ENCODE measurements at regions of chr19 and their contacts with region 1.

Region 1: DNA sequence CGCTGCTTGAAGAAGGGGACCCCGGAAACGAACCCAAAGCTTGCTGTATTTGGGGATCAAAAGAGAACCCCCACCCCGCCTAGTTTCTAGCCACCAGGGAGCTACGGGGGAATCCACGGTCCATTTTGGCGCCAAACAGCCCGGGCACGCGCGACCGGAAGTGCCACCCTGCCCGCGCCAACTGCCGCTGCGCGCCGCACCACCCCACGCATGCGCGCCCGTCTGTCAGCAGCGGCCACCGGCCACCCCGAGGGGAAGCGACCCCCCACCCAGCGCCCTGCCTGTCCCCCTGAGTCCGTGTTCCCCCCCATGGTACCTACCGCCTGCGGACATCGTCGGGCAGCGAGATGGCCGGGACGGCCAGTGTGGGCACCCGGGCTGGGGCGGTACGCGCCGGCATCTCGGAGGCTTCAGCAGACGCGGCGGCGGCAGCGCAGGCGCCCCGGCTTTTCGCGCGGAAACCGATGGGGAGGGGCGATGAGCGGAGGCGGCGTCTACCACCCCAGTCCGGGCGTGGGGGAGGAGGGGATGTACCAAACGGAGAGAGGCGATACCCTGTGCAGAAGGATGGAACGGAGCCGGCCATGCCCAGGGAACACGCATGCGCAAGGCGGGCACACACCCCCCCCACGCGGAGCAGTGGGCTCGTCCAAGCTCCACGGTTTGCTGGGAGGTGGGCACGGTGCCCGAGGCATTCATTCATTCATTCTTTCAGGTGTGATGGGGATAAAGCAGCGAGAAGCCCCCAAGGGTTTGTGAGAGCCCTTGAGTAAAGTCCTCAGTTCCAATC is at the start of gene DNMT1:
- DNase-seq: peak; percentile 97 to 99 (median 98)
- ATAC-seq: peak; percentile 98
- H3K4me3 ChIP-seq: peak within 1 kb of the TSS; percentile 60
- H3K27ac ChIP-seq: peak within 1 kb of the TSS; percentile 68
- H3K4me1 ChIP-seq: peaks cover 2% of the 10 kb centered on the region
- H3K27me3 ChIP-seq: no peaks in the 10 kb centered on the region
- total RNA-seq, gene DNMT1: 21.0 to 37.2 (median 30.3) TPM

Region 2: GRCh38 chr19:10142701-10143375 is 51.9 kb before region 1 on chr19:
- intact Hi-C with region 1: no loop called
- DNase-seq: no peak
- ATAC-seq: no peak
- H3K4me3 ChIP-seq: no peak overlapping the region
- H3K27ac ChIP-seq: no peak overlapping the region
- H3K4me1 ChIP-seq: no peaks in the 10 kb centered on the region
- H3K27me3 ChIP-seq: no peaks in the 10 kb centered on the region

Region 3: GRCh38 chr19:10238172-10238783 is 43.6 kb after region 1 on chr19:
- intact Hi-C with region 1: loop called in 1 of 4 experiments (anchors 5 kb)
- DNase-seq: peak; percentile 87 to 91 (median 89)
- ATAC-seq: peak; percentile 80 to 85
- H3K4me3 ChIP-seq: no peak overlapping the region
- H3K27ac ChIP-seq: peak overlapping the region; percentile 16
- H3K4me1 ChIP-seq: no peaks in the 10 kb centered on the region
- H3K27me3 ChIP-seq: no peaks in the 10 kb centered on the region

Region 4: GRCh38 chr19:10251792-10252694 is 57.3 kb after region 1 on chr19 and contains the start of gene MRPL4:
- intact Hi-C with region 1: loop called in 1 of 4 experiments (anchors 10 kb)
- DNase-seq: peak; percentile 96 to 99 (median 97)
- ATAC-seq: peak; percentile 95
- H3K4me3 ChIP-seq: peak within 1 kb of the TSS; percentile 56
- H3K27ac ChIP-seq: peak within 1 kb of the TSS; percentile 38
- H3K4me1 ChIP-seq: no peaks in the 10 kb centered on the region
- H3K27me3 ChIP-seq: no peaks in the 10 kb centered on the region
- total RNA-seq, gene MRPL4: 54.1 to 65.4 (median 60.5) TPM

Measured in right cardiac atrium (tissue), 5 donors.